ENCODE measurements at regions of chr20 and their contacts with region 1.

Region 1: DNA sequence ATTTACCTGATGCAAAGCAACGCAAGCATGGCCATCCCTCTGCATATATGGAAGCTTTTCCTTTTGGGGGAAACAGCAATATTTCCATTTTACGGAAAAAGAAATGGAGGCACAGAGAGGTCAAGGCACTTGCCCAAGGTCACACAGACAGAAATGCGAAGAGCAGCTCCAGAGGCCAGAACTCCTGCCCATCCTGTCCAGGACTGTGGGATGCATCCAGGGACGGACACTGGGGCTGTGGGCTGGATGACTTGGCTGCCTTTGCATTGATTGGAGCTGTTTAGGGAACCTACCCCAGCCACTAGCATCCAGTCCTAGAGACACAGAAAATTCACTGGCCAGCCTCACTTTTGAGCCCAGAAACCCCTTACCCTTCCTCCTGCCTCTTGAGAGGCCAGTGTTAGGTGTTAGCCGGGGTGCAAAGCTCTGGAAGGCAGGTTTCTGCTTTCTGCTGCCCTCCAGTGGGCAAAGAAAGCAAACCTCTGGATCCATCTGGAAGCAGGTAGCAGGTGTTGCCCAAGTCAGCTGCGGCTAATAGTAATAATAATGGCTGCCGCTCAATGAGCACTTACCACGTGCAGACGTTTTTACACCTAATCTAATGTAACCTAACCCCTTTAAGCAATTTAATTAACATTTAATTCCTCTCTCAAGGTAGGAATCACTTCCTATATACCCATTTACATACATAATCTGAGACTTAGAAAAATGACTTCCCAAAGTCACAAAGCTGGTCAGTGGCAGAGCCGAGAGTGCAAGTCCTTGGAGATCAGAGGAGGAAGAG is 31.7 kb upstream of the CCN5 start:
- DNase-seq: peak in 12 of 14 experiments; percentile 20 to 81 (median 52)
- ATAC-seq: peak; percentile 76
- H3K4me3 ChIP-seq: no peak overlapping the region
- H3K4me3 Mint-ChIP-seq: no peak overlapping the region
- H3K27ac ChIP-seq: no peak overlapping the region
- H3K27ac Mint-ChIP-seq: no peak overlapping the region
- H3K4me1 ChIP-seq: peaks cover 5% of the 10 kb centered on the region
- H3K4me1 Mint-ChIP-seq: peaks cover 15% of the 10 kb centered on the region
- H3K27me3 ChIP-seq: no peaks in the 10 kb centered on the region
- H3K27me3 Mint-ChIP-seq: no peaks in the 10 kb centered on the region
- CTCF ChIP-seq: peak; percentile 58

Region 2: GRCh38 chr20:43507150-43508080 is 1176.0 kb before region 1 on chr20 and contains the start of gene L3MBTL1:
- CTCF ChIA-PET with region 1: no interaction called
- POLR2A ChIA-PET with region 1: no interaction called
- intact Hi-C with region 1: no loop called
- DNase-seq: peak in 2 of 14 experiments; percentile 15 to 31
- ATAC-seq: no peak
- H3K4me3 ChIP-seq: peak within 1 kb of the TSS; percentile 47
- H3K4me3 Mint-ChIP-seq: peak within 1 kb of the TSS; percentile 59
- H3K27ac ChIP-seq: no peak within 1 kb of the TSS
- H3K27ac Mint-ChIP-seq: no peak within 1 kb of the TSS
- H3K4me1 ChIP-seq: peaks cover 15% of the 10 kb centered on the region
- H3K4me1 Mint-ChIP-seq: peaks cover 8% of the 10 kb centered on the region
- H3K27me3 ChIP-seq: peaks cover 21 to 25% of the 10 kb centered on the region in 2 experiments
- H3K27me3 Mint-ChIP-seq: peaks cover 56% of the 10 kb centered on the region
- CTCF ChIP-seq: no peak
- total RNA-seq, gene L3MBTL1: 10.2 to 10.5 TPM

Region 3: DNA sequence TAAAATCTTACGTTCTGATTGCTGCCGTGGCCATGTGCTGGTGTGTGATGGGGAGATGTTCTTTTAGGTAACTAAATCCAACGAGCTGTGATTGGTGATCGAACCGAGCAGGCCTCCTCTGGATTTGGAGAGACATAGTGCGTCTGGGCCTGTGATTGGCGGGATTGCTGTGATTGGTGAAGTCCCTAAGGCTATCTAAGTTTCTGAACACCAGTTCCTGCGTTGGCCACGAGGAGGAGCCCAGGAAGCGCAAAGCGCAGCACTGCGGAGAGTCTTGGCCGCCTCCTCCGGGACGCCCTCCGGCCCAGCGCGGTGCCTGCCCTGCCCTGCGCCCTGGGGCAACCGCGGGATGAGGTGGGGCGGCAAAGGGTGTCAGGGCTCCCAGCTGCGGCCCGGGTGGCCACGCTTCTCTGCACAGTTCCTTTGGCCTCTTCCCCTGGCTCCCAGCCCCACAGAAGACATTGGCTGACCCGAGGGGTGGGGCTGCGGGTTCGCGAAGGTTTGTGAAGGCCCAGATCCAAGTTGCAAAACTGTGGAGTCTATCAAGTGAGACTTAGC is 294.9 kb before region 1 on chr20:
- CTCF ChIA-PET with region 1: interaction called, 9 read pairs
- POLR2A ChIA-PET with region 1: interaction called, 3 read pairs
- intact Hi-C with region 1: loop called in 1 of 2 experiments (anchors 5 kb)
- DNase-seq: peak; percentile 39 to 85 (median 56)
- ATAC-seq: peak; percentile 92
- H3K4me3 ChIP-seq: no peak overlapping the region
- H3K4me3 Mint-ChIP-seq: no peak overlapping the region
- H3K27ac ChIP-seq: no peak overlapping the region
- H3K27ac Mint-ChIP-seq: no peak overlapping the region
- H3K4me1 ChIP-seq: peaks cover 8% of the 10 kb centered on the region
- H3K4me1 Mint-ChIP-seq: peaks cover 15% of the 10 kb centered on the region
- H3K27me3 ChIP-seq: peaks cover 4% of the 10 kb centered on the region in 2 experiments
- H3K27me3 Mint-ChIP-seq: peaks cover 8% of the 10 kb centered on the region
- CTCF ChIP-seq: peak; percentile 66

Region 4: GRCh38 chr20:44481719-44482416 is 201.6 kb before region 1 on chr20:
- CTCF ChIA-PET with region 1: no interaction called
- POLR2A ChIA-PET with region 1: no interaction called
- intact Hi-C with region 1: no loop called
- DNase-seq: no peak
- ATAC-seq: no peak
- H3K4me3 ChIP-seq: no peak overlapping the region
- H3K4me3 Mint-ChIP-seq: no peak overlapping the region
- H3K27ac ChIP-seq: no peak overlapping the region
- H3K27ac Mint-ChIP-seq: no peak overlapping the region
- H3K4me1 ChIP-seq: no peaks in the 10 kb centered on the region
- H3K4me1 Mint-ChIP-seq: peaks cover 5% of the 10 kb centered on the region
- H3K27me3 ChIP-seq: no peaks in the 10 kb centered on the region
- H3K27me3 Mint-ChIP-seq: no peaks in the 10 kb centered on the region
- CTCF ChIP-seq: no peak

Region 5: GRCh38 chr20:44615169-44615791 is 68.2 kb before region 1 on chr20:
- CTCF ChIA-PET with region 1: interaction called, 14 read pairs
- POLR2A ChIA-PET with region 1: interaction called, 6 read pairs
- intact Hi-C with region 1: loop called in 1 of 2 experiments (anchors 5 kb)
- DNase-seq: peak in 3 of 14 experiments; percentile 8 to 33 (median 27)
- ATAC-seq: no peak
- H3K4me3 ChIP-seq: no peak overlapping the region
- H3K4me3 Mint-ChIP-seq: peak overlapping the region; percentile 69
- H3K27ac ChIP-seq: peak overlapping the region; percentile 11 to 29
- H3K27ac Mint-ChIP-seq: peak overlapping the region; percentile 98
- H3K4me1 ChIP-seq: peaks cover 66% of the 10 kb centered on the region
- H3K4me1 Mint-ChIP-seq: peaks cover 83% of the 10 kb centered on the region
- H3K27me3 ChIP-seq: no peaks in the 10 kb centered on the region
- H3K27me3 Mint-ChIP-seq: no peaks in the 10 kb centered on the region
- CTCF ChIP-seq: no peak

Region 6: DNA sequence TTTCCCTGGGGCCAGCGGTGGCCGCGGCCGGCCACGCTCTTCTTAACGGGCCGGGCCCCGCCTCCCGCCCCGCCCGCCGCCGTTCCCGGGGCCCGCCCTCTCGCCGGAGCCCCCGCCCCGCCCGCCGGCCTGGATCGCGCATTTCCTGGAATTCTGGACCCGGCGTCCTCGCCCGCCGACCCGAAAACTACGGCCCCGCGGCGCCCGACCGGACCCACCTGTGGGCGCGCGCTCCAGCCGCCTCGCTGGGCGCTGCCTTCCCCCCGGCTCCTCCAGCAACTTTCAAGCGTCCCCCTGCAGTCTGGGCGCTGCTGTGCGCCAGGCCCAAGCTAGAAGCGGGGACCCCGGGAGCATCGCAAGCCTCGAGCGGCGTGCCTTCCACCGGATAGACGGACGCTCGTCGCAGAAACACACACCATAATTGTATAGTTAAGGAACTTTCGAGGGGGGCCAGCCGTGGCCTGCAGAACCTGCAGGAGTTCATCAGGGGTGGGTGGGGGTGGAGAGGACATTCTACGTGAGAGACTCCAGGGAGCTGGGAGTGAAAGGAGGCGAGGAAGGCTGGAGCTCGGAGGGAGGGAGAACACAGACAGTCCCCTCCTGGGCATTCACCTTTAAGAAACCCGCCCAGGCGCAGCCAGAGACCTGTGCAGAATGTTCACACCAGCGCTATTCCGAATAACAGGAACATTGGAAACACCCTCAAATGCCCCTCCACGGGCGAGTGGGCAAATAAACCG is 31.6 kb before region 1 on chr20 and contains the start of gene ADA:
- CTCF ChIA-PET with region 1: interaction called, 24 read pairs
- POLR2A ChIA-PET with region 1: interaction called, 6 read pairs
- intact Hi-C with region 1: loop called (anchors 5 kb)
- DNase-seq: peak in 12 of 14 experiments; percentile 20 to 70 (median 41)
- ATAC-seq: peak; percentile 56
- H3K4me3 ChIP-seq: peak within 1 kb of the TSS; percentile 93
- H3K4me3 Mint-ChIP-seq: peak within 1 kb of the TSS; percentile 90
- H3K27ac ChIP-seq: peak within 1 kb of the TSS; percentile 66 to 69
- H3K27ac Mint-ChIP-seq: peak within 1 kb of the TSS; percentile 91
- H3K4me1 ChIP-seq: peaks cover 55% of the 10 kb centered on the region
- H3K4me1 Mint-ChIP-seq: peaks cover 47% of the 10 kb centered on the region
- H3K27me3 ChIP-seq: no peaks in the 10 kb centered on the region
- H3K27me3 Mint-ChIP-seq: no peaks in the 10 kb centered on the region
- CTCF ChIP-seq: no peak
- total RNA-seq, gene ADA: 31.7 to 32.8 TPM

Region 7: DNA sequence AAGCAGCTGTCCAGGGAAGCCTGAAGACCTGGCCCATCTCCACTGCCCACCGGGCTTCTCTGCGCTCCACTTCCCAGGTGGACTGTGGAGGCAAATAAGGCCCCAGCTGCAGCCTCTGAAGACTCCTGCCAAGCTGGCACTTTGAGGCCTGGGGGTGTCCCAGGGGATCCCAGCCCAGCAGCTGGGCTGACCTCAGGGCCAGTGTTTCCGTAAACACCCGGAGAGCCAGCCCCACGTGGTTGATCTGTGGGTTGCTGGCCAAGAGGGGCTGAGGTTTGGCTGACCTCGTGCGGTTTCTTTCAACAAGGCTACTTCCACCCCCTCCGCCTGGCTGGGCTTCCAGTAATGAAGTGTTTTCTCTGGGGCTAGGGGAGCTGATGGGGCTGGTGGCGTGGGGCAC is 19.3 kb after region 1 on chr20:
- CTCF ChIA-PET with region 1: no interaction called
- POLR2A ChIA-PET with region 1: no interaction called
- intact Hi-C with region 1: no loop called
- DNase-seq: no peak
- ATAC-seq: no peak
- H3K4me3 ChIP-seq: no peak overlapping the region
- H3K4me3 Mint-ChIP-seq: no peak overlapping the region
- H3K27ac ChIP-seq: no peak overlapping the region
- H3K27ac Mint-ChIP-seq: no peak overlapping the region
- H3K4me1 ChIP-seq: no peaks in the 10 kb centered on the region
- H3K4me1 Mint-ChIP-seq: no peaks in the 10 kb centered on the region
- H3K27me3 ChIP-seq: no peaks in the 10 kb centered on the region
- H3K27me3 Mint-ChIP-seq: no peaks in the 10 kb centered on the region
- CTCF ChIP-seq: no peak

Region 8: GRCh38 chr20:44837946-44838345 is 154.5 kb after region 1 on chr20:
- CTCF ChIA-PET with region 1: no interaction called
- POLR2A ChIA-PET with region 1: no interaction called
- intact Hi-C with region 1: no loop called
- DNase-seq: no peak
- ATAC-seq: no peak
- H3K4me3 ChIP-seq: no peak overlapping the region
- H3K4me3 Mint-ChIP-seq: no peak overlapping the region
- H3K27ac ChIP-seq: no peak overlapping the region
- H3K27ac Mint-ChIP-seq: no peak overlapping the region
- H3K4me1 ChIP-seq: no peaks in the 10 kb centered on the region
- H3K4me1 Mint-ChIP-seq: no peaks in the 10 kb centered on the region
- H3K27me3 ChIP-seq: peaks cover 0 to 5% of the 10 kb centered on the region in 2 experiments
- H3K27me3 Mint-ChIP-seq: peaks cover 25% of the 10 kb centered on the region
- CTCF ChIP-seq: no peak

Region 9: DNA sequence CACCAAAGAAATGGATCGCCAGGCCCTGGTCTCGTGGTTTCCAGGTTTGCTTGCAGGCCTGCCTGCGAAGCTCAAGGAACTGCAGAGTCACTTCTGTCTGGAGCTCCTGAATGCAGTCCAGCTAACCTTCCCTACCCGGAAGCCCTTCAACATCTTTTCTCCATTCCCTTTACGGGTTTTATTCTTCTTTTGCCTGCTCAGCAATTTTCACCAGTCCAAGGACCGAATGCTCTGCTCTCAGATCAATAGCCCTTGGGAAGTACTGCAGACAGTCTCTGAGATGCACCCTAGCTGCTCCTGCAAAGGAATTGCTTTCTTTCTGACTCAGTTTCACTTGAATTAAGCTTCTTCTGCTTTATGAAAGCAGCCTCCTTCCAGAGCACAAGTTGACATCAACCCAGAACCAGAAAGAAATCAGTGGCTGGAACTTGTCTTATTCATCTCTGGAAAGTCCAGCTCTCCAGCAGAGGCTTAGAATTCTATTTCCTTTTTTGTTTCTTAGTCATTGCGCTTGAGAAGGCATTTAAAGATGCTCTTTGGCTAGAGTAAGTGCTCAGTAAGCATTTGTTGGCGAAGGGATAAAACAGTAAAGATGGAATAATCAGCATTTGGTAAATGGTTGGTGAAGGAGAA is 183.4 kb after region 1 on chr20:
- CTCF ChIA-PET with region 1: interaction called, 7 read pairs
- POLR2A ChIA-PET with region 1: interaction called, 3 read pairs
- intact Hi-C with region 1: loop called (anchors 1 kb)
- DNase-seq: peak in 2 of 14 experiments; percentile 32 to 40
- ATAC-seq: no peak
- H3K4me3 ChIP-seq: no peak overlapping the region
- H3K4me3 Mint-ChIP-seq: peak overlapping the region; percentile 70
- H3K27ac ChIP-seq: no peak overlapping the region
- H3K27ac Mint-ChIP-seq: no peak overlapping the region
- H3K4me1 ChIP-seq: peaks cover 7% of the 10 kb centered on the region
- H3K4me1 Mint-ChIP-seq: peaks cover 10% of the 10 kb centered on the region
- H3K27me3 ChIP-seq: peaks cover 0 to 5% of the 10 kb centered on the region in 2 experiments
- H3K27me3 Mint-ChIP-seq: peaks cover 9% of the 10 kb centered on the region
- CTCF ChIP-seq: no peak

Region 10: GRCh38 chr20:45311589-45312211 is 628.2 kb after region 1 on chr20:
- CTCF ChIA-PET with region 1: interaction called, 4 read pairs
- POLR2A ChIA-PET with region 1: no interaction called
- intact Hi-C with region 1: loop called (anchors 5 kb)
- DNase-seq: peak in 13 of 14 experiments; percentile 32 to 75 (median 48)
- ATAC-seq: peak; percentile 74
- H3K4me3 ChIP-seq: no peak overlapping the region
- H3K4me3 Mint-ChIP-seq: no peak overlapping the region
- H3K27ac ChIP-seq: no peak overlapping the region
- H3K27ac Mint-ChIP-seq: no peak overlapping the region
- H3K4me1 ChIP-seq: peaks cover 8% of the 10 kb centered on the region
- H3K4me1 Mint-ChIP-seq: peaks cover 7% of the 10 kb centered on the region
- H3K27me3 ChIP-seq: peaks cover 33 to 43% of the 10 kb centered on the region in 2 experiments
- H3K27me3 Mint-ChIP-seq: peaks cover 83% of the 10 kb centered on the region
- CTCF ChIP-seq: peak; percentile 69